WTC11 (cell line): ENCODE measurements at regions of chr17 and their contacts with region 1.

Region 1: GRCh38 chr17:42577532-42578281 is at the start of gene PSMC3IP:
- DNase-seq: peak; percentile 96
- ATAC-seq: peak; percentile 81
- H3K4me3 Mint-ChIP-seq: peak within 1 kb of the TSS; percentile 98
- H3K27ac Mint-ChIP-seq: peak within 1 kb of the TSS; percentile 100
- H3K4me1 Mint-ChIP-seq: peaks cover 20% of the 10 kb centered on the region
- H3K27me3 Mint-ChIP-seq: no peaks in the 10 kb centered on the region
- CTCF ChIP-seq: no peak
- total RNA-seq, gene PSMC3IP: 20.1 to 23.3 TPM (median 21.6 TPM) in 3 replicates

Region 2: GRCh38 chr17:42536048-42536371 is 41.7 kb before region 1 on chr17 and contains the start of gene NAGLU:
- CTCF ChIA-PET with region 1: interaction called, 13 read pairs
- POLR2A ChIA-PET with region 1: interaction called, 3 read pairs
- DNase-seq: peak; percentile 86
- ATAC-seq: peak; percentile 90
- H3K4me3 Mint-ChIP-seq: peak within 1 kb of the TSS; percentile 74
- H3K27ac Mint-ChIP-seq: peak within 1 kb of the TSS; percentile 85
- H3K4me1 Mint-ChIP-seq: peaks cover 31% of the 10 kb centered on the region
- H3K27me3 Mint-ChIP-seq: peaks cover 22% of the 10 kb centered on the region
- CTCF ChIP-seq: no peak
- total RNA-seq, gene NAGLU: 28.9 to 39.3 TPM (median 30.4 TPM) in 3 replicates

Region 3: DNA sequence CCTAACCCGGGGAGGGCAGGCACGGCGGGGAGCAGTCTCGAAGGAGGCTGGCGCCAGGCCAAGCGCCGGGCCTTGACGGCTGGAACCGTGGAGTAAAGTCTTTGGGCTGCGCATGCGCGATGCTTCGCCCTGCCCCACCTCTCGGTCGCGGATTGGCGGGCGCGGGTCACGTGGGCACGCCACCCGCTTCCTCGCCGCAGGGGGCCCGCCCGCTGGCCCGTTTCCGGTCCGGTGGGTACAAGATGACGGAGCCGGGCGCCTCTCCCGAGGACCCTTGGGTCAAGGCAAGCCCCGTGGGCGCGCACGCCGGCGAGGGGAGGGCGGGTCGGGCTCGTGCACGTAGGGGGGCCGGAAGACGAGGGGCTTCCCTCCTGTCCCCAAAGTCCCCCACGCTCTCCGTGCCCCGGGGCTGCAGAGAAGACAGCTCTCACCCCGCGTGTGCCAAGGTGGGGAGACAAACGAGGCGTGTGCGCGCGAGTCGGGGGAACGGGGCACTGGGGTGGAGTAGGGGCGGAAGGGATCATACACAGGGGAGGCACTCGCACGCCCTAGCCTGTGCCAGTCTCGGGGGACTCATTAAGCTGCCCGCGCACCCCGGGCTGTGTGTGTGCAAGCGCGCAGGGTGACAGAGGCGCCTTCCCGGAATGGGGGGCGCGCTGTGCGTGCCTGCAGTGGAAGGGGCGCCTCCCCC is 10.7 kb before region 1 on chr17 and contains the start of gene MLX:
- CTCF ChIA-PET with region 1: interaction called, 30 read pairs
- POLR2A ChIA-PET with region 1: no interaction called
- DNase-seq: peak; percentile 92
- ATAC-seq: peak; percentile 70
- H3K4me3 Mint-ChIP-seq: peak within 1 kb of the TSS; percentile 94
- H3K27ac Mint-ChIP-seq: peak within 1 kb of the TSS; percentile 92
- H3K4me1 Mint-ChIP-seq: peaks cover 22% of the 10 kb centered on the region
- H3K27me3 Mint-ChIP-seq: no peaks in the 10 kb centered on the region
- CTCF ChIP-seq: no peak
- total RNA-seq, gene MLX: 26.9 to 34.9 TPM (median 30.1 TPM) in 3 replicates

Region 4: GRCh38 chr17:42653179-42654124 is 75.7 kb after region 1 on chr17:
- CTCF ChIA-PET with region 1: interaction called, 15 read pairs
- POLR2A ChIA-PET with region 1: no interaction called
- DNase-seq: peak; percentile 59
- ATAC-seq: peak; percentile 79
- H3K4me3 Mint-ChIP-seq: peak overlapping the region; percentile 64
- H3K27ac Mint-ChIP-seq: 0 out of 2 replicates have a peak overlapping the region, but pooled peaks have one; percentile 3
- H3K4me1 Mint-ChIP-seq: peaks cover 10% of the 10 kb centered on the region
- H3K27me3 Mint-ChIP-seq: peaks cover 5% of the 10 kb centered on the region
- CTCF ChIP-seq: no peak

Region 5: DNA sequence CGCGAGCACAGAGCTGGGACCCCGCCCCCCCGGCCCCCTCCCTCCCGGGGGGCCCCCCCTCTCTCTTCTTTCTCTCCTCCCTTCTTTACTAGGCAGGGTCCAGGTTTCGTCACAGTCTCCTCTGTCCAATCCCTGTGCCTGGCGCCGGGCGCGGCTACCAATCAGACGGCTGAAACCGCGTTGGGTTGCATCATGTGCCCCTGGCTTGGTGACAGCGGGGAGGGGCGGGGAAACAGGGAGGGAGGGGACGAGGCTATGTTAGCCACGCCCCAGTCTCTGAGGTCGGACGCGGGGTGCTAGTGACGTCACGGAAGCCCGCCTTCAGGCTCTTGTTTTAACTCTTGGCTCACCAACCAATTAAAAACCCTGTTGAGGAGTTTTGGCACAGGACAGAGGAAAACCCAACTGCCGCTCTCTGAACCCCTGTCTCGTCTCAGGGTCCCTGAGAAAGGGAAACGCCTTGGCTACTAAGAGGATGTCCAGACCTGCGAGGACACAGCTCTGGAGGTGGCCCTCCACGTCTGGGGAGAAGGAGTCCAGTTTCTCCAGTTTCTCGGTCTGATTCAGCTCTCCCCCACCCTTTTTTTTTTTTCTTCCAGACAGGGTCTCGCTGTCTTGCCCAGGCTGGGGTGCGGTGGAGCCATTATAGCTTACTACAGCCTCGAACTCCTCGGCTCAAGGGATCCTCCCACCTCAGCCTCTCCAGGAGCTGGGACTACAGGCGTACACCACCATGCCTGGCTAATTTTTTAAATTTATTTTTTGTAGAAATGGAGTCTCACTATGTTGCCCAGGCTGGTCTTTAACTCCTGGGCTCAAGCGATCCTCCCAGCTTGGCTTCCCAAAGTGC is 99.5 kb after region 1 on chr17:
- CTCF ChIA-PET with region 1: interaction called, 122 read pairs
- POLR2A ChIA-PET with region 1: interaction called, 9 read pairs
- DNase-seq: peak; percentile 100
- ATAC-seq: peak; percentile 68
- H3K4me3 Mint-ChIP-seq: peak overlapping the region; percentile 79
- H3K27ac Mint-ChIP-seq: peak overlapping the region; percentile 94
- H3K4me1 Mint-ChIP-seq: peaks cover 40% of the 10 kb centered on the region
- H3K27me3 Mint-ChIP-seq: peaks cover 8% of the 10 kb centered on the region
- CTCF ChIP-seq: no peak

Region 6: DNA sequence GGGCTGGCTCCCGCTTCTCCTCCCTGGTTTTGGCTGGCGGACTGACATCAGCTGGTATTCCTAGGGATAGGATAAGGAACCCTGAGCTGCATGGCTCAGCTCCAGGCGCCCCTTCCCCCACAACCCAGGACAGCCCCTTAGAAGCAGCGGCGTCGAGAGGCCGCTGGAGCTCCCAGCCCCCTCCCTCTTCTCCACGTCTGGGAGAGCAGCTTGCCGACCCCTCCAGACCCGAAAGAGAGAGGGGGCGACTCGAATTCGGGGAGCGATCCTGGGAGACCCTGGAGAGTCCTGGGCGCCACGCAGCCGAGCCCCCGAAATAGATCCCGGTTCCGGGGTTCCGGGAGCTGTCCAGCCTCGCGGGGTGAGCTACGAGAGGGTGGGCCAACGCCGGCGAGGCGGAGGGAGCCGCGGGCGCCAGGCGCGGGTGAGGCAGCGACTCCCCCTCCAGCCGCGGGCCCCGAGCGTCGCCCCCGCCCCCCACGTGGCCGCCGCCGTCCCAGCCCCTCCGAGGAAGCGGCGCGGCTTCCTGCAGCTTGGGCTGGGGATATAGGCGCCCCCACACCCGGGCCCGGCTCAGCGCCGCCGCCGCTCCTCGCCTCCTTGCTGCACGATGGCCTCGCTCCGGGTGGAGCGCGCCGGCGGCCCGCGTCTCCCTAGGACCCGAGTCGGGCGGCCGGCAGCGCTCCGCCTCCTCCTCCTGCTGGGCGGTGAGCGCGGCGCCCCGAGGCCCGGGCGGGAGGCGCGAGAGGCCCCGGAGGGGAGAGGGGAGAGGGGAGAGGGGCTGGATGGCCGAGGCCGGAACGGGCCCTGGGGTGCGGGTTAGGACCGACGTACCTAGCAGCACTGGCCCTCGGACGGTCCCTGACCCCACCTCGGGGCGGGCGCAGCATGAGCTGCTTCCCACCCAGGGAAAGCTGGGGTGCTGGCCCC is 183.2 kb after region 1 on chr17 and contains the start of gene RAMP2:
- CTCF ChIA-PET with region 1: interaction called, 62 read pairs
- POLR2A ChIA-PET with region 1: no interaction called
- DNase-seq: peak; percentile 51
- ATAC-seq: peak; percentile 60
- H3K4me3 Mint-ChIP-seq: peak within 1 kb of the TSS; percentile 67
- H3K27ac Mint-ChIP-seq: no peak within 1 kb of the TSS
- H3K4me1 Mint-ChIP-seq: peaks cover 25% of the 10 kb centered on the region
- H3K27me3 Mint-ChIP-seq: peaks cover 55% of the 10 kb centered on the region
- CTCF ChIP-seq: no peak
- total RNA-seq, gene RAMP2: 10.9 to 13.1 TPM (median 11.6 TPM) in 3 replicates

Region 7: GRCh38 chr17:42819944-42820535 is 242.3 kb after region 1 on chr17:
- CTCF ChIA-PET with region 1: interaction called, 24 read pairs
- POLR2A ChIA-PET with region 1: no interaction called
- DNase-seq: peak; percentile 84
- ATAC-seq: peak; percentile 39
- H3K4me3 Mint-ChIP-seq: no peak overlapping the region
- H3K27ac Mint-ChIP-seq: peak overlapping the region; percentile 71
- H3K4me1 Mint-ChIP-seq: peaks cover 7% of the 10 kb centered on the region
- H3K27me3 Mint-ChIP-seq: no peaks in the 10 kb centered on the region
- CTCF ChIP-seq: peak; percentile 72